ENCODE measurements at regions of chrX and their contacts with region 1.

Region 1: DNA sequence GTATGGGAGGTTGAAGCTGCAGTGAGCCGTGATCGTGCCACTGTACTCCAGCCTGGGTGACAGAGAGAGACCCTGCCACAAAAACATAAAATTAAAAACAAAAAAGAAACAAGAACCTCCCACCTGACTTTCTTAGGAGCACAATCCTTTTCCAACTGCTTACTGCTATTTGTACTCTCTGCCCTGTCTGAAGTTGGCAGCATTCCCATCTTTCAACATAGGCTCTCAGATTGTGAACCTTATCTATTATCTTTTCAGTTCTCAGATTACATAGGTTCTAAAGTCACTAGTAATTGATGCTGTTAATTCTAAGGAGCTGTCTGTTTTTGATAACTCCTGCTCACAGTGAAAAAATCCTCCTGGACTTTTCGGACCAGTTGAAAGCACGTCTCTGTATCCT is 812.2 kb upstream of the CT83 start:
- DNase-seq: no peak
- H3K4me3 ChIP-seq: no peak overlapping the region
- H3K27ac ChIP-seq: no peak overlapping the region
- H3K4me1 ChIP-seq: no peaks in the 10 kb centered on the region
- H3K27me3 ChIP-seq: no peaks in the 10 kb centered on the region
- CTCF ChIP-seq: no peak
- POLR2A ChIP-seq: no peak

Region 2: GRCh38 chrX:116841290-116841689 is 433.7 kb before region 1 on chrX:
- CTCF ChIA-PET with region 1: no interaction called
- POLR2A ChIA-PET with region 1: no interaction called
- dilution Hi-C with region 1: no loop called
- intact Hi-C with region 1: loop called (anchors 5 kb)
- DNase-seq: no peak
- H3K4me3 ChIP-seq: no peak overlapping the region
- H3K27ac ChIP-seq: no peak overlapping the region
- H3K4me1 ChIP-seq: no peaks in the 10 kb centered on the region
- H3K27me3 ChIP-seq: no peaks in the 10 kb centered on the region
- CTCF ChIP-seq: no peak
- POLR2A ChIP-seq: no peak

Region 3: GRCh38 chrX:117429501-117429900 is 154.6 kb after region 1 on chrX:
- CTCF ChIA-PET with region 1: no interaction called
- POLR2A ChIA-PET with region 1: no interaction called
- dilution Hi-C with region 1: no loop called
- intact Hi-C with region 1: no loop called
- DNase-seq: no peak
- H3K4me3 ChIP-seq: no peak overlapping the region
- H3K27ac ChIP-seq: no peak overlapping the region
- H3K4me1 ChIP-seq: no peaks in the 10 kb centered on the region
- H3K27me3 ChIP-seq: no peaks in the 10 kb centered on the region
- CTCF ChIP-seq: no peak
- POLR2A ChIP-seq: no peak

Region 4: GRCh38 chrX:117487421-117487820 is 212.5 kb after region 1 on chrX:
- CTCF ChIA-PET with region 1: no interaction called
- POLR2A ChIA-PET with region 1: no interaction called
- dilution Hi-C with region 1: no loop called
- intact Hi-C with region 1: no loop called
- DNase-seq: no peak
- H3K4me3 ChIP-seq: no peak overlapping the region
- H3K27ac ChIP-seq: no peak overlapping the region
- H3K4me1 ChIP-seq: no peaks in the 10 kb centered on the region
- H3K27me3 ChIP-seq: no peaks in the 10 kb centered on the region
- CTCF ChIP-seq: no peak
- POLR2A ChIP-seq: no peak

Region 5: DNA sequence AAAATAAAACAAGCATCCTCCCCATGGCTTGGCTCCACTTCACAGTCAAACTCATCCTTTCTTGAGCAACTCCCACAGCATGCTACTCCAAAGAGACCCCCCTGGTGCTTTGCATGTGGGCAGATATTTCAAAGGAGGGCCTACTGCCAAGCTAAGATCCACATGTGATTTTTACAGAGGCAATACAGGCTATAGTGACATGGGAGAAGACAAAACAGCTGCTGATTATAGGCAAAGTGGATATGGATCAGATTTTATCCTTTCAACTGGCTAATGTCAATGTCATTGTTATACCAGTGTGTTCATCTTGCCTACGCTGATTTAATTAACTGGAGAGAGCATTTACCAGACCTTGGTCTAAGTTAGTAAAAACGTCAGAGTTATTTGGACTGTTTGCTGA is 513.4 kb after region 1 on chrX:
- CTCF ChIA-PET with region 1: no interaction called
- POLR2A ChIA-PET with region 1: no interaction called
- dilution Hi-C with region 1: no loop called
- intact Hi-C with region 1: no loop called
- DNase-seq: no peak
- H3K4me3 ChIP-seq: no peak overlapping the region
- H3K27ac ChIP-seq: no peak overlapping the region
- H3K4me1 ChIP-seq: no peaks in the 10 kb centered on the region
- H3K27me3 ChIP-seq: no peaks in the 10 kb centered on the region
- CTCF ChIP-seq: no peak
- POLR2A ChIP-seq: no peak

Region 6: GRCh38 chrX:118761939-118762707 is 1487.2 kb after region 1 on chrX:
- CTCF ChIA-PET with region 1: no interaction called
- POLR2A ChIA-PET with region 1: no interaction called
- dilution Hi-C with region 1: no loop called
- intact Hi-C with region 1: no loop called
- DNase-seq: no peak
- H3K4me3 ChIP-seq: no peak overlapping the region
- H3K27ac ChIP-seq: no peak overlapping the region
- H3K4me1 ChIP-seq: no peaks in the 10 kb centered on the region
- H3K27me3 ChIP-seq: no peaks in the 10 kb centered on the region
- CTCF ChIP-seq: no peak
- POLR2A ChIP-seq: no peak

Measured in endothelial cell of umbilical vein (primary cell).